ENCODE measurements at regions of chr1 and their contacts with region 1.

Region 1: GRCh38 chr1:165597883-165598675 is 33.0 kb upstream of the MGST3 start:
- DNase-seq: peak; percentile 99
- H3K4me3 Mint-ChIP-seq: peak overlapping the region; percentile 89
- H3K27ac Mint-ChIP-seq: peak overlapping the region; percentile 95
- H3K4me1 Mint-ChIP-seq: peaks cover 23% of the 10 kb centered on the region
- H3K27me3 Mint-ChIP-seq: peaks cover 27% of the 10 kb centered on the region
- CTCF ChIP-seq: no peak

Region 2: GRCh38 chr1:165376041-165376810 is 221.9 kb before region 1 on chr1:
- CTCF ChIA-PET with region 1: interaction called, 128 read pairs
- POLR2A ChIA-PET with region 1: interaction called, 4 read pairs
- intact Hi-C with region 1: no loop called
- DNase-seq: peak; percentile 99
- H3K4me3 Mint-ChIP-seq: peak overlapping the region; percentile 63
- H3K27ac Mint-ChIP-seq: peak overlapping the region; percentile 71
- H3K4me1 Mint-ChIP-seq: peaks cover 20% of the 10 kb centered on the region
- H3K27me3 Mint-ChIP-seq: peaks cover 18% of the 10 kb centered on the region
- CTCF ChIP-seq: no peak

Region 3: GRCh38 chr1:165580941-165581871 is 16.9 kb before region 1 on chr1:
- CTCF ChIA-PET with region 1: interaction called, 23 read pairs
- POLR2A ChIA-PET with region 1: no interaction called
- intact Hi-C with region 1: no loop called
- DNase-seq: peak; percentile 22
- H3K4me3 Mint-ChIP-seq: no peak overlapping the region
- H3K27ac Mint-ChIP-seq: no peak overlapping the region
- H3K4me1 Mint-ChIP-seq: peaks cover 6% of the 10 kb centered on the region
- H3K27me3 Mint-ChIP-seq: peaks cover 12% of the 10 kb centered on the region
- CTCF ChIP-seq: no peak

Region 4: GRCh38 chr1:165645654-165646366 is 47.7 kb after region 1 on chr1:
- CTCF ChIA-PET with region 1: interaction called, 52 read pairs
- POLR2A ChIA-PET with region 1: interaction called, 4 read pairs
- intact Hi-C with region 1: no loop called
- DNase-seq: peak; percentile 42
- H3K4me3 Mint-ChIP-seq: no peak overlapping the region
- H3K27ac Mint-ChIP-seq: no peak overlapping the region
- H3K4me1 Mint-ChIP-seq: peaks cover 17% of the 10 kb centered on the region
- H3K27me3 Mint-ChIP-seq: no peaks in the 10 kb centered on the region
- CTCF ChIP-seq: no peak

Region 5: GRCh38 chr1:165726169-165726568 is 128.1 kb after region 1 on chr1:
- CTCF ChIA-PET with region 1: interaction called, 15 read pairs
- POLR2A ChIA-PET with region 1: no interaction called
- intact Hi-C with region 1: no loop called
- DNase-seq: no peak
- H3K4me3 Mint-ChIP-seq: no peak overlapping the region
- H3K27ac Mint-ChIP-seq: no peak overlapping the region
- H3K4me1 Mint-ChIP-seq: no peaks in the 10 kb centered on the region
- H3K27me3 Mint-ChIP-seq: no peaks in the 10 kb centered on the region
- CTCF ChIP-seq: no peak

Region 6: GRCh38 chr1:165928075-165928731 is 330.1 kb after region 1 on chr1:
- CTCF ChIA-PET with region 1: interaction called, 19 read pairs
- POLR2A ChIA-PET with region 1: no interaction called
- intact Hi-C with region 1: no loop called
- DNase-seq: peak; percentile 82
- H3K4me3 Mint-ChIP-seq: no peak overlapping the region
- H3K27ac Mint-ChIP-seq: no peak overlapping the region
- H3K4me1 Mint-ChIP-seq: no peaks in the 10 kb centered on the region
- H3K27me3 Mint-ChIP-seq: no peaks in the 10 kb centered on the region
- CTCF ChIP-seq: peak; percentile 78